IMR-90 (cell line): ENCODE measurements at regions of chr19 and their contacts with region 1.

Region 1: DNA sequence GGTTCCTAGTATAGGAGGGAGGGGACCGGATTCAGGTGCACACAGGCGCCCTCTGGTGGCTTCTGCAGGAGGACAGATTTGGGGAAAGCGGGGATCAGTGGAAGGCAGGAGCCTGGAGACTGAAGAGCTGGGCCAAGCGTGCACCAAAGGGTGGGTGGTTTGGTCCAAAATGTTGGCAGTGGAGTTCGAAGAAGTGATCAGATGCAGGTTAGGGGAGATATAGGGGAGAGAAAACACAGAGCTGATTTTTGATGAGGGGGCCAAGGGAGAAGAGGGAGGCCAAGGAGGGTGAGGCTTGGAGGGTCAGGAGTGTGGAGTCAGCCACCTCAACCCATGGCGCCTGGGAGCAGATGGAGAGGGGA is 6.8 kb upstream of the CARM1 start:
- DNase-seq: peak; percentile 68
- ATAC-seq: peak; percentile 93
- H3K4me3 ChIP-seq: no peak overlapping the region
- H3K27ac ChIP-seq: no peak overlapping the region
- H3K4me1 ChIP-seq: peaks cover 3% of the 10 kb centered on the region
- H3K27me3 ChIP-seq: no peaks in the 10 kb centered on the region
- CTCF ChIP-seq: peak; percentile 85
- POLR2A ChIP-seq: no peak
- RAD21 ChIP-seq: peak; percentile 66

Region 2: DNA sequence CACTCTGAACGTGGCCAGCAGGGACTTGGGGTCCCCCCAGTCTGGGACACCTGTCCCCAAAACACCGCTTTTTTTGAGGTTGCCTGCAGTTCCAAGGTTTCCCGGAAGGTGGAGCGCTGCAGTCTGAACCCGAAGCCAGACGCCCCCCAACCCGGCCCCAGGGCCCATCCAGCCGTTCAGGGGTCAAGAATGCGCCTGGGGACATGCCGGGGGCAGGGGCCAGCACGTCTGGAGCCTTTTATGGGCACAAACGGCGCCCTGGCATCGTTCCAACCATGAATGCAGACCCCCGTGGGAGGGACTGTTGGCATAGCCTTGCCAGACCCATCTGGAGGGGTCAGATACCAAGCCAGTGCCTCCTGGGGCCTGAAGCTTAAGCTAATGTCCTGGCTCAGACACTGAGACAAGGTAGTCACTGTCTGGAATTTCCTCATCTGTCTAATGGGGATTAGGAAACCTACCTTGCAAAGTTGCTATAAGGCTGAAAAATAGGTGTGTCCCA is 354.2 kb before region 1 on chr19:
- CTCF ChIA-PET with region 1: no interaction called
- POLR2A ChIA-PET with region 1: no interaction called
- dilution Hi-C with region 1: no loop called
- in situ Hi-C with region 1: no loop called
- intact Hi-C with region 1: no loop called
- DNase-seq: no peak
- ATAC-seq: peak; percentile 26
- H3K4me3 ChIP-seq: no peak overlapping the region
- H3K27ac ChIP-seq: no peak overlapping the region
- H3K4me1 ChIP-seq: no peaks in the 10 kb centered on the region; the same call in 1 of the 2 replicates
- H3K27me3 ChIP-seq: peaks cover 26% of the 10 kb centered on the region
- CTCF ChIP-seq: peak; percentile 47
- POLR2A ChIP-seq: no peak
- RAD21 ChIP-seq: 0 out of 2 replicates have a peak, but pooled peaks have one; percentile 10

Region 3: DNA sequence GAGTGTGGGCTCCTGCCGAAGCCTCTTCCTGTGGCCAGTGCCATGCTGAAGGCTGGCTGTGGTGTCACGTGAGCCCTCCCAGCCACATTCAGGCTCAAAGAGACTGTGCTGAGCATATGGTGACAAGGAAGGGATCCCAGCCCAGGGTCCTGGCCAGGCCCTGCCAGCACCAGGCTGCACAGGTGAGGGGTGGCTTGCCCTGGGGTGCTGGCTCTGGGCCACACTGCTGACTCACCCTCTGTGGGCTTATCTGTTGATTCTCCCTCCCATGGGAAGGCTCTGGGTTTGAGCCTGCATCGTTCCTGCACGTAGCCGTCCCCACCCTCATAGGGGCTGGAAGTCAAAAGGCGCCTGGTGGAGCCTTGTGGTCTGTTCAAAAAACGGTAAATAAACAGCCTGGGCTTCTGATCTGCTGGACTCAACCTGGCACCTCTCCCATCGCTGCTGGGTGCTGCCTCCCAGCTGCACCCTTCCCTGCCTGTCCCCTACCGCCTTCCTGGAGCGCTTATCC is 115.5 kb before region 1 on chr19:
- CTCF ChIA-PET with region 1: no interaction called
- POLR2A ChIA-PET with region 1: no interaction called
- dilution Hi-C with region 1: no loop called
- in situ Hi-C with region 1: no loop called
- intact Hi-C with region 1: no loop called
- DNase-seq: no peak
- ATAC-seq: peak; percentile 63
- H3K4me3 ChIP-seq: no peak overlapping the region
- H3K27ac ChIP-seq: no peak overlapping the region
- H3K4me1 ChIP-seq: peaks cover 15% of the 10 kb centered on the region
- H3K27me3 ChIP-seq: no peaks in the 10 kb centered on the region
- CTCF ChIP-seq: no peak
- POLR2A ChIP-seq: no peak
- RAD21 ChIP-seq: no peak

Region 4: GRCh38 chr19:10835754-10836477 is 28.6 kb before region 1 on chr19 and contains the start of gene TMED1:
- CTCF ChIA-PET with region 1: interaction called, 7 read pairs
- POLR2A ChIA-PET with region 1: interaction called, 14 read pairs
- dilution Hi-C with region 1: no loop called
- in situ Hi-C with region 1: no loop called
- intact Hi-C with region 1: loop called (anchors 1 kb)
- DNase-seq: peak; percentile 98
- ATAC-seq: peak; percentile 93
- H3K4me3 ChIP-seq: peak within 1 kb of the TSS; percentile 64
- H3K27ac ChIP-seq: peak within 1 kb of the TSS; percentile 96
- H3K4me1 ChIP-seq: peaks cover 9% of the 10 kb centered on the region
- H3K27me3 ChIP-seq: no peaks in the 10 kb centered on the region
- CTCF ChIP-seq: peak; percentile 41
- POLR2A ChIP-seq: peak; percentile 74
- RAD21 ChIP-seq: peak; percentile 29; the same call in 1 of the 2 replicates
- total RNA-seq, gene TMED1: 32.8 and 37.6 TPM in 2 replicates